Calu3 (cell line): ENCODE measurements at regions of chr10 and their contacts with region 1.

Region 1: GRCh38 chr10:62268399-62269114 is at the start of gene RTKN2:
- DNase-seq: peak; percentile 96
- H3K4me3 Mint-ChIP-seq: peak within 1 kb of the TSS; percentile 77
- H3K27ac Mint-ChIP-seq: peak within 1 kb of the TSS; percentile 93
- H3K4me1 Mint-ChIP-seq: peaks cover 44% of the 10 kb centered on the region
- H3K27me3 Mint-ChIP-seq: no peaks in the 10 kb centered on the region
- CTCF ChIP-seq: no peak
- total RNA-seq, gene RTKN2: 25.0 and 26.7 TPM in 2 replicates

Region 2: GRCh38 chr10:62098278-62099121 is 170.1 kb before region 1 on chr10:
- CTCF ChIA-PET with region 1: no interaction called
- intact Hi-C with region 1: no loop called
- DNase-seq: peak; percentile 28
- H3K4me3 Mint-ChIP-seq: peak overlapping the region; percentile 46
- H3K27ac Mint-ChIP-seq: peak overlapping the region; percentile 100
- H3K4me1 Mint-ChIP-seq: peaks cover 53% of the 10 kb centered on the region
- H3K27me3 Mint-ChIP-seq: no peaks in the 10 kb centered on the region
- CTCF ChIP-seq: no peak

Region 3: GRCh38 chr10:62384057-62384446 is 115.5 kb after region 1 on chr10:
- CTCF ChIA-PET with region 1: interaction called, 8 read pairs
- intact Hi-C with region 1: loop called (anchors 5 kb)
- DNase-seq: peak; percentile 73
- H3K4me3 Mint-ChIP-seq: peak overlapping the region; percentile 27
- H3K27ac Mint-ChIP-seq: peak overlapping the region; percentile 96
- H3K4me1 Mint-ChIP-seq: peaks cover 65% of the 10 kb centered on the region
- H3K27me3 Mint-ChIP-seq: no peaks in the 10 kb centered on the region
- CTCF ChIP-seq: no peak

Region 4: DNA sequence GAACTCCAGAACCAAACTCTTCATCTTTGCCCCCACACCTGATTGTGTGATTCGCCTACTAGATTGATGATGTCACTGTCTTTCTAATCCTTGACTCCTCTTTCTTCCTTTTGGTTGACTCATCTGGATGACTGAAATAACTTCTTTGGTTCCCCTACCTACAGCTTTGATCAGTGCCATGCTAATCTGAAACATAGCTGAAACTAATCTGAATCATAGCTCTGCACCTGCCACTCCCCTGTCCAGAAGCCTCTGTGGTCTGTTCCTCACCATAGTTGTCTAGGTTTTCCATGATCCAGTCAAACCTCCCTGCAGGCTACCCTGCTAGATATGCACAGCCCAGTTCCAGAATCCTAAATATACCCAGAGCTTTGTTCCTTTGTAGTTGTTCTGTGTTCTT is 157.5 kb after region 1 on chr10:
- CTCF ChIA-PET with region 1: interaction called, 5 read pairs
- intact Hi-C with region 1: loop called (anchors 2 kb)
- DNase-seq: peak; percentile 12
- H3K4me3 Mint-ChIP-seq: no peak overlapping the region
- H3K27ac Mint-ChIP-seq: no peak overlapping the region
- H3K4me1 Mint-ChIP-seq: peaks cover 23% of the 10 kb centered on the region
- H3K27me3 Mint-ChIP-seq: no peaks in the 10 kb centered on the region
- CTCF ChIP-seq: no peak

Region 5: GRCh38 chr10:62554632-62555199 is 286.2 kb after region 1 on chr10:
- CTCF ChIA-PET with region 1: no interaction called
- intact Hi-C with region 1: loop called (anchors 10 kb)
- DNase-seq: peak; percentile 22
- H3K4me3 Mint-ChIP-seq: no peak overlapping the region
- H3K27ac Mint-ChIP-seq: no peak overlapping the region
- H3K4me1 Mint-ChIP-seq: no peaks in the 10 kb centered on the region
- H3K27me3 Mint-ChIP-seq: peaks cover 20% of the 10 kb centered on the region
- CTCF ChIP-seq: peak; percentile 51